ENCODE measurements at regions of chr12 and their contacts with region 1.

Region 1: DNA sequence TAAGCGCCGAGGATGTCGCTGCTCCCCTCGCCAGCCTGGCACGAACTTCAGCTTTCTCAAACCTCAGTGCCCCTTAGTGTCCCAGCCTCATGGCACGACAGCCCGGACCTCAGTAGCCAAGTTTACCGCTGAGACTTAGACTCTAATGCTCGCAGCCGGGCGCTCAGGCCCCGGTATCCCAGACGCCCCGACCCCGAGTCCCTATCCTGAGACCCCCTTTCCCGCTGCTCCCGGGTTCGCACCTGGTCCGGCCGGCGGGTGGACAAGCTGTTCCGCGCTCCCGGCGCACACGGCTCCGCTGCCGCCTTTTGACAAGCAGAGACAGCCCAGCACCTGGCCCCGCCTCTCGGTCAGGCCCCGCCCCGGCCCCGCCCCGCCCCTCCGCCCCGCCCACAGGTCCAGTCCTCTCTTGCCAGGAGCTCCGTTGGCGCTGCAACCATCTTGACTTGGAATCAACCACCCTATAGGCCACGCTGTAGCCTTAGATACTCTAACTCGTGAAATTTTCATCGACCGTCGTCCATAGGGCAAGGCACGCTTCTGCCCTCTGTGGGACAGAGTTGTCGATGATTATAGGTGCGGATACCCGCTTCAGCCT is at the start of gene VDR:
- DNase-seq: peak; percentile 62
- H3K4me3 Mint-ChIP-seq: peak within 1 kb of the TSS; percentile 100
- H3K27ac Mint-ChIP-seq: peak within 1 kb of the TSS; percentile 99
- H3K4me1 Mint-ChIP-seq: peaks cover 53% of the 10 kb centered on the region
- H3K27me3 Mint-ChIP-seq: peaks cover 34% of the 10 kb centered on the region
- total RNA-seq, gene VDR: 305 and 318 TPM in 2 replicates

Region 2: GRCh38 chr12:47812797-47813510 is 91.9 kb before region 1 on chr12:
- intact Hi-C with region 1: loop called (anchors 1 kb)
- DNase-seq: peak; percentile 92
- H3K4me3 Mint-ChIP-seq: peak overlapping the region; percentile 96
- H3K27ac Mint-ChIP-seq: peak overlapping the region; percentile 98
- H3K4me1 Mint-ChIP-seq: peaks cover 92% of the 10 kb centered on the region
- H3K27me3 Mint-ChIP-seq: no peaks in the 10 kb centered on the region

Region 3: GRCh38 chr12:47868552-47869031 is 36.2 kb before region 1 on chr12:
- intact Hi-C with region 1: loop called (anchors 1 kb)
- DNase-seq: no peak
- H3K4me3 Mint-ChIP-seq: peak overlapping the region; percentile 55
- H3K27ac Mint-ChIP-seq: peak overlapping the region; percentile 98
- H3K4me1 Mint-ChIP-seq: peaks cover 90% of the 10 kb centered on the region
- H3K27me3 Mint-ChIP-seq: no peaks in the 10 kb centered on the region

Region 4: GRCh38 chr12:47949441-47950308 is 44.9 kb after region 1 on chr12:
- intact Hi-C with region 1: loop called (anchors 1 kb)
- DNase-seq: peak; percentile 41
- H3K4me3 Mint-ChIP-seq: no peak overlapping the region
- H3K27ac Mint-ChIP-seq: peak overlapping the region; percentile 42
- H3K4me1 Mint-ChIP-seq: peaks cover 23% of the 10 kb centered on the region
- H3K27me3 Mint-ChIP-seq: peaks cover 18% of the 10 kb centered on the region

Region 5: GRCh38 chr12:48165094-48165981 is 260.5 kb after region 1 on chr12:
- intact Hi-C with region 1: loop called (anchors 2 kb)
- DNase-seq: peak; percentile 34
- H3K4me3 Mint-ChIP-seq: no peak overlapping the region
- H3K27ac Mint-ChIP-seq: no peak overlapping the region
- H3K4me1 Mint-ChIP-seq: peaks cover 6% of the 10 kb centered on the region
- H3K27me3 Mint-ChIP-seq: peaks cover 23% of the 10 kb centered on the region

Region 6: GRCh38 chr12:48366131-48366530 is 461.3 kb after region 1 on chr12:
- intact Hi-C with region 1: no loop called
- DNase-seq: no peak
- H3K4me3 Mint-ChIP-seq: no peak overlapping the region
- H3K27ac Mint-ChIP-seq: no peak overlapping the region
- H3K4me1 Mint-ChIP-seq: no peaks in the 10 kb centered on the region
- H3K27me3 Mint-ChIP-seq: peaks cover 15% of the 10 kb centered on the region